ENCODE measurements at regions of chr2 and their contacts with region 1.

Region 1: DNA sequence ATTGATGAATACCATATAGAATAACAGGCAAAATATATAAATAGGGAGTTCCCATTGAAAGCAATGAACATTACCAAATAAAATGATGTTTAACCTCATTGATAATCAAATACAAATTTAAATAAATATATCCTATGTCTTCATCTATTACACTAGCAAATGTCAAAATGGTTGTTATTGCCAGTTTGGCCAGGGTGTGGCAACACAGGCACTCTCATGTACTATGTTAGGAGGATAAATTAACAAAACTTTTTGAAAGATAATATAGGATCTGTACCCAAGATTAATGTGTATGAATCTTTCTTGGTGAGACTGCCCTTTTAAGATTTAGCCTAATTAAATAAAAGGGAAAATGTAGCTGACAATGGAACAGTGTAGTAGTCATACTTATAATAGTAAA is 659.3 kb downstream of the ERBB4 start:
- DNase-seq: peak; percentile 63
- H3K4me3 ChIP-seq: no peak overlapping the region
- H3K27ac ChIP-seq: no peak overlapping the region
- H3K4me1 ChIP-seq: peaks cover 9% of the 10 kb centered on the region
- H3K27me3 ChIP-seq: no peaks in the 10 kb centered on the region
- CTCF ChIP-seq: peak; percentile 60

Region 2: GRCh38 chr2:212548450-212548819 is 669.1 kb after region 1 on chr2:
- CTCF ChIA-PET with region 1: no interaction called
- POLR2A ChIA-PET with region 1: no interaction called
- intact Hi-C with region 1: loop called (anchors 5 kb)
- DNase-seq: peak; percentile 79
- H3K4me3 ChIP-seq: no peak overlapping the region
- H3K27ac ChIP-seq: peak overlapping the region; percentile 10
- H3K4me1 ChIP-seq: peaks cover 20% of the 10 kb centered on the region
- H3K27me3 ChIP-seq: no peaks in the 10 kb centered on the region
- CTCF ChIP-seq: peak; percentile 61

Measured in A673 (cell line).